ENCODE measurements at regions of chr7 and their contacts with region 1.

Region 1: DNA sequence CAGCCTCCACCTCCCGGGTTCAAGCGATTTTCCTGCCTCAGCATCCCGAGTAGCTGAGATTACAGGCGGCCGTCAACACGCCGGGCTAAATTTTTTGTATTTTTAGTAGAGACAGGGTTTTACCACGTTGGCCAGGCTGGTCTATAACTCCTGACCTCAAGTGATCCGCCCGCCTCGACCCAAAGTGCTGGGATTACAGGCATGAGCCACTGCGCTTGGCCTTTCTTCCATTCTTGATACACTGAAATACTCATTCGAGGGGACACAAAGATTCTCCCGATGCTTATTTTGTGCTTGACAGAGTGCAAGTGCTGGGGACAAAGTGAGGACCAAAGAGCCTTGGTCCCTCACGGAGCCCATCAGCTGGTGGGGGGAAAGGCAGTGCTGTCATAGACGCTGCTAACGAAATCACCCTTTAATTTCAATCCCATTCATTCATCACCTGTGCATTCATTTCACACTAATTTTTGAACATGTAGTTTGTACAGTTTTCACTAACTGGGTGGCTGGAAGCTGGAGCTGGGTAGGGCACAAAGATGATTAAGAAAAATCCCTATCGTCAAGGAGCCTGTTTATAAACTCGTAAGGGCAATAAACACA is 621 bp upstream of the FAM133B start:
- H3K4me3 Mint-ChIP-seq: peak overlapping the region; percentile 98
- H3K27ac Mint-ChIP-seq: peak overlapping the region; percentile 95
- H3K4me1 Mint-ChIP-seq: peaks cover 29% of the 10 kb centered on the region
- H3K27me3 Mint-ChIP-seq: peaks cover 10% of the 10 kb centered on the region

Region 2: DNA sequence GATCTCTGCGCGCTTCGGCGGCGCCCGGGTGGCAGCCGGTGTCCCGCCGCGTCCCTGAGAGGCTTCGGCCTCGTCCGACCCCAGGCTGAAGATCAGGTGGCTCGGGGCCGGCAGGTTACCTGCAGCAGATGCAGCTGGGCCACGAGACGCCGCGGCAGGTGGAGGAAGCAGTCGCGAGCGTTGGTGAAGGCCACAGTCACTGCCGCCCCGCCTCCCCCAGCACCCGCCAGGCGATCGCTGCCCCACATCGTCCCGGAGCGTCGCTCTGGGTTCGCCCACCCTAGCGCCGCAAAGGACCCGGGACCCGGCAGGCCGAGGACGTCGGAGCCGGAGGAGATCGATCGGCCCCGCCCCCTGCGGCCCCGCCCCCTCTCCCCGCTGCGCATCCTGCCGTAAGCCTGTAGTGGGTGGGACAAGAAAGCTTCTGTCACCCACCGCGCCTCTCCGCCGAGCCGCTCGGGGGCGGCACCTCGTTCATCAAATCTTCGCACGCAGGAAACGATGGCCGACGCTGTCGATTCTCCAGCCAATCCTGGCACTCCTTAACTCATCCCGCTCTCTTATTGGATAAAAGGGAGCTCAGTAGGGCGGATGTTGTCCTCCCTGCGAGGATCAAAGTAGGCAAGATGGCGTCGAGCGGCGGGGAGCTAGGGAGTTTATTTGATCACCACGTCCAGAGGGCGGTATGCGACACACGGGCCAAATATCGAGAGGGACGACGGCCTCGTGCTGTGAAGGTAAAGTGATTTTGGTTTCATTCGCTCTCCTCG is 62.4 kb before region 1 on chr7 and contains the starts of genes PEX1 and RBM48:
- intact Hi-C with region 1: loop called (anchors 1 kb)
- H3K4me3 Mint-ChIP-seq: peak within 1 kb of the TSS; percentile 88
- H3K27ac Mint-ChIP-seq: peak within 1 kb of the TSS; percentile 88
- H3K4me1 Mint-ChIP-seq: peaks cover 20% of the 10 kb centered on the region
- H3K27me3 Mint-ChIP-seq: no peaks in the 10 kb centered on the region

Region 3: GRCh38 chr7:92641921-92642511 is 51.2 kb after region 1 on chr7:
- intact Hi-C with region 1: no loop called
- H3K4me3 Mint-ChIP-seq: no peak overlapping the region
- H3K27ac Mint-ChIP-seq: peak overlapping the region; percentile 42
- H3K4me1 Mint-ChIP-seq: peaks cover 37% of the 10 kb centered on the region
- H3K27me3 Mint-ChIP-seq: no peaks in the 10 kb centered on the region